Activated CD8-positive, alpha-beta T cell treated with anti-CD3 and anti-CD28 coated beads for 36 hours (primary cell): ENCODE measurements at regions of chr11 and their contacts with region 1.

Region 1: DNA sequence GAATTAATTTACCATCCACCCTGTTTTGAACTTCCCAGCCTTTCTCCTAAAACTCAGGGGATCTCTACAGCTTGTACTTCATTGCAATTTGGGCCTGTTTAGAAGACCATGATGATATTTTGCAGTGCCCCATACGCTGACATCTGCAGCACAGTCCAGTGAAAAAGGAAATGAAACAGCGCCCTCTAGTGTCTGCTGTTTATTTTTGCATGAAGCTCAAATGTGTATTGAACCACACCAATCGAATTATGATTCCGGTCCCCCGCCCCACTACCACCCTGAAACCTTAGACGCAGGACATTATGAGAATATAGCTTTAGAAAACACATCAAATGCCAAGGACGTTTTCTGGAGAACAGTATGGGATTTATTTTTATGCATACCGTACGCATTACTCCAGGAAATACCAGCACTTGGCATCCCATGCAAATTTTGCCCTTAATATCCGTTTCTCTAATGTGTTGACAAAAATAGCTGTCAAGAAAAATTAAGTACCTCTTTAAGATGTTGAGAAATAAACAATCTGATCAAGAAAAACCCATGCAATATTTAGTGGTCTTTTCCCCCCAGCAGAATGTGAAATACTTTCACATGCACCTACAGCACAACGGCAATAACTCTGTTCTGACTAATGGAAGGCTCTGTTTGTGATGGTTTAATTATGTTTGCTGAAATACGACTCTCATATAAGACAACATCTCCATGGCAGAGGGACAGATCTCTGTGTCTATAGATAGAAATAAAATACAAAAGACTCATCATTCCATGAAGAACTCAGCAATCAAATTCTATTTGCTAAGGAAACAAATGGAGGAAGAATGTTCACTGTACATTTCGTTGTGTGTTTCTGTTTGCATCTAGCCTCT is 93.9 kb downstream of the TECTA start:
- DNase-seq: peak; percentile 63
- ATAC-seq: peak; percentile 66
- H3K4me3 Mint-ChIP-seq: no peak overlapping the region
- H3K27ac Mint-ChIP-seq: no peak overlapping the region
- H3K4me1 Mint-ChIP-seq: no peaks in the 10 kb centered on the region
- H3K27me3 Mint-ChIP-seq: peaks cover 12% of the 10 kb centered on the region
- CTCF ChIP-seq: peak; percentile 92

Region 2: DNA sequence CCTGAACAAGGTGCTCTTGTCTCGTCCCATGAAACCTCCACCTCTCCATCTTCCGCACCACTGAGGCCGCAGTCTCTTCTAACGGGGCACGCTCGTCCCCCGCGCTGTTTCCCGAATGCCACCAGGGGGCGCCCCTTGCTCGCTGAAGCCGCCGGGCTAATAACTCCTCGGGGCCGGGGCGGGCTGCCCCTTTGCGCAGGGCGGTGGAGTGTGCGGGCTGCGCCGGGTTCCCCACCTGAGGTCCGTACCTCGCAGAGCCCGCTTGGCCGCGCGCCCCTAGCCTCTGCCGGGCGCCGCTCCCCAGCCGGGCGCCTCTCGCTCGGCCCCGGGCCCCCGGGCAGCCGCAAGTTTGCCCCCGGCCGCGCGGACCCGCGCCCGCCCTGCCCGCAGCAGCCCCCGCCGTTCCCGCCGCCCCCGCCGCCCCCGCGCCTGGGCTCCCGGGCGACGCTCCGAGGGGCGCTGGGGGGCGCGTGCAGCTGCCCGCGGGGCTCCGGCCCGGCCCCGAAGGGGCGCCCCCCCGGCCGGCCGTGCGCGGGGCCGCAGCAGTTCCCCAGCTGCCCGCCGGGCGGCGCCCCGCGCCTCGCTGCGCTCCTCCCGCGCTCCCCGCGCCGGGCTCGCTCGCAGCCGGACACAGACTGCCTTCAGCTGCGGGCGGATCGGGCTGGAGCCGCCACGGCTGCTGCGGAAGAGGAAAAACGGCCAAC is 683.7 kb before region 1 on chr11 and contains the start of gene GRIK4:
- CTCF ChIA-PET with region 1: interaction called, 7 read pairs
- POLR2A ChIA-PET with region 1: no interaction called
- intact Hi-C with region 1: loop called (anchors 10 kb)
- DNase-seq: peak; percentile 86
- ATAC-seq: peak; percentile 92
- H3K4me3 Mint-ChIP-seq: no peak within 1 kb of the TSS
- H3K27ac Mint-ChIP-seq: no peak within 1 kb of the TSS
- H3K4me1 Mint-ChIP-seq: no peaks in the 10 kb centered on the region
- H3K27me3 Mint-ChIP-seq: peaks cover 58% of the 10 kb centered on the region
- CTCF ChIP-seq: peak; percentile 78
- total RNA-seq, gene GRIK4: not detected

Region 3: GRCh38 chr11:121023848-121024751 is 170.9 kb before region 1 on chr11 and contains the start of gene TBCEL:
- CTCF ChIA-PET with region 1: interaction called, 10 read pairs
- POLR2A ChIA-PET with region 1: no interaction called
- intact Hi-C with region 1: no loop called
- DNase-seq: peak; percentile 85
- ATAC-seq: peak; percentile 84
- H3K4me3 Mint-ChIP-seq: peak within 1 kb of the TSS; percentile 73
- H3K27ac Mint-ChIP-seq: peak within 1 kb of the TSS; percentile 80
- H3K4me1 Mint-ChIP-seq: peaks cover 25% of the 10 kb centered on the region
- H3K27me3 Mint-ChIP-seq: no peaks in the 10 kb centered on the region
- CTCF ChIP-seq: no peak
- total RNA-seq, gene TBCEL: 6.8 to 7.2 TPM

Region 4: DNA sequence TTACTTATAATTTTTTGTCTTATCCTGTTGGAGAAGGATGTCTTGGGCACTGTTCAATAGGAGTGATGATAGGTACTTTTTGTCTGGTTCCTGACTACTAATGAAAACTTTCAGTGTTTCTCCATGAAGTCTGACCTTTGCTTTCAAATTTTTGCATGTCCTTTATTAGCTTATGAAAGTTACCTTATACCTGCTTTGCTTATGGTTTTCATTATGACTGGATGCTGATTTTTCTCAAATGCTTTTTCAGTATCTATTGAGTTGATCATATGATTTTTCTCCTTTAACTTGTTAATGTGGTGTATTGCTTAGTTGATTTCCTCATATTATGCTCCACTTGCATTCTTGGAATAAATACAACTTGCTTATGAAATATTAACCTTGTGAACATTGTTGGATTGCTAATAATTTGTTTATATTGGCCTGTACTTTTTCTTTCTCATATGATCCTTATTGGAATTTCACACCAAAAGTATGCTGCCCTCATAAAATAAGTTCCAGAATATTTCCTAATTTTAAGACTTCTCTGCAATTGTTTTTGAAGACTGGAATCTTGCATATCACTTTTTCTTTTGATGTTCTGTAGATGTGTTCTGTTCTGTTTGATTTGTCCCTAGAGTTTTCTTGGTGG is 12.6 kb after region 1 on chr11:
- CTCF ChIA-PET with region 1: interaction called, 18 read pairs
- POLR2A ChIA-PET with region 1: no interaction called
- intact Hi-C with region 1: no loop called
- DNase-seq: no peak
- ATAC-seq: no peak
- H3K4me3 Mint-ChIP-seq: no peak overlapping the region
- H3K27ac Mint-ChIP-seq: no peak overlapping the region
- H3K4me1 Mint-ChIP-seq: no peaks in the 10 kb centered on the region
- H3K27me3 Mint-ChIP-seq: peaks cover 17% of the 10 kb centered on the region
- CTCF ChIP-seq: no peak

Region 5: DNA sequence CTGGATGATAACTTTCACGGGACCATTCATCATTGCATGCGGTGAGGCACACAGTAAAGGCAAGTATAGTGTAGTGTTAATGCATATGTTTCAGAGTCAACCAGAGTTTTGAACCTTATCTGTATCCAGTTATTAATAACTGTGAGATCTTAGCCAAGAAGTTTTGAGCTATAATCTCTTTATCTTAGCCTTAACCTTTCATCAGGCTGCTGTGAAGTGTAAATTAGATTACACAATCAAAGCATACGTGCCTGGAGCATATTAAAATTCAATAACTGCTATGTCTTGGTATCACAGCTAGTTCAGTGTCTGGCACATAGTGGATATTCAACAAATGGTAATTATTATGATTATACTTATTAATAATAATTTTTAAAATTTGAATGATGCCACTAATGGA is 26.8 kb after region 1 on chr11:
- CTCF ChIA-PET with region 1: interaction called, 14 read pairs
- POLR2A ChIA-PET with region 1: no interaction called
- intact Hi-C with region 1: no loop called
- DNase-seq: no peak
- ATAC-seq: no peak
- H3K4me3 Mint-ChIP-seq: no peak overlapping the region
- H3K27ac Mint-ChIP-seq: no peak overlapping the region
- H3K4me1 Mint-ChIP-seq: no peaks in the 10 kb centered on the region
- H3K27me3 Mint-ChIP-seq: peaks cover 12% of the 10 kb centered on the region
- CTCF ChIP-seq: no peak